ENCODE measurements at regions of chr11 and their contacts with region 1.

Region 1: GRCh38 chr11:19723572-19724342 is 11.1 kb downstream of the NAV2 start:
- DNase-seq: peak; percentile 12 to 76 (median 31)
- H3K4me3 ChIP-seq: no peak overlapping the region
- H3K4me3 Mint-ChIP-seq: peak overlapping the region; percentile 0 to 77 (median 42)
- H3K27ac ChIP-seq: no peak overlapping the region
- H3K27ac Mint-ChIP-seq: peak overlapping the region; percentile 74 to 96 (median 90)
- H3K4me1 ChIP-seq: peaks cover 31% of the 10 kb centered on the region
- H3K4me1 Mint-ChIP-seq: peaks cover 37 to 41% (median 37%) of the 10 kb centered on the region in 3 donors
- H3K27me3 ChIP-seq: no peaks in the 10 kb centered on the region
- H3K27me3 Mint-ChIP-seq: peaks cover 0 to 2% of the 10 kb centered on the region in 2 donors

Region 2: GRCh38 chr11:19712281-19713220 is 11.2 kb before region 1 on chr11 and contains the start of gene NAV2:
- CTCF ChIA-PET with region 1: interaction called, 12 read pairs
- POLR2A ChIA-PET with region 1: interaction called, 9 read pairs
- DNase-seq: peak; percentile 62 to 80 (median 75)
- H3K4me3 ChIP-seq: peak within 1 kb of the TSS; percentile 68
- H3K4me3 Mint-ChIP-seq: peak within 1 kb of the TSS; percentile 94 to 98 (median 96)
- H3K27ac ChIP-seq: peak within 1 kb of the TSS; percentile 24
- H3K27ac Mint-ChIP-seq: peak within 1 kb of the TSS; percentile 71 to 98 (median 90)
- H3K4me1 ChIP-seq: peaks cover 20% of the 10 kb centered on the region
- H3K4me1 Mint-ChIP-seq: peaks cover 21 to 36% (median 32%) of the 10 kb centered on the region in 3 donors
- H3K27me3 ChIP-seq: peaks cover 25% of the 10 kb centered on the region
- H3K27me3 Mint-ChIP-seq: peaks cover 27 to 29% of the 10 kb centered on the region in 2 donors
- total RNA-seq, gene NAV2: 0.42 to 1.2 TPM

Region 3: DNA sequence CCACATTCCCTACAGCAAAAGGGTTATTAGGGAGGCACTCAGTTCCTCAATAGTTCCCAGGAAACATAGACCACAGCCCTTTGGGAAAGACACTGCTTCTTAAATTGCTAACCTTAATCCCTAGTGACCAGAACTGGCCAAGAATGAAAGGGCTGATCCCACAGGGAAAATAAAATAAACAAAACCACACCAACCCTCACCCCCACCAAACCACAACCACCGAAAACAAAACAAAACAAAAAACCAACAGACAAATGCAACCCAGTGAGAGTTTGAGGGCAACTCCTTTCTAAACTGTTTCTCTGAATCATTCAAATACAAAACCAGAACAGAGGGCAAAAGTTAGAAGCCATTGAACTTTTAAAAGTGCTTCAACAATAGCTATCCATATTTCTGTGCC is 46.1 kb after region 1 on chr11:
- CTCF ChIA-PET with region 1: no interaction called
- POLR2A ChIA-PET with region 1: no interaction called
- DNase-seq: no peak
- H3K4me3 ChIP-seq: no peak overlapping the region
- H3K4me3 Mint-ChIP-seq: no peak overlapping the region
- H3K27ac ChIP-seq: no peak overlapping the region
- H3K27ac Mint-ChIP-seq: no peak overlapping the region
- H3K4me1 ChIP-seq: no peaks in the 10 kb centered on the region
- H3K4me1 Mint-ChIP-seq: no peaks in the 10 kb centered on the region
- H3K27me3 ChIP-seq: no peaks in the 10 kb centered on the region
- H3K27me3 Mint-ChIP-seq: peaks cover 12 to 19% of the 10 kb centered on the region in 2 donors